A549 (cell line): ENCODE measurements at regions of chr1 and their contacts with region 1.

Region 1: DNA sequence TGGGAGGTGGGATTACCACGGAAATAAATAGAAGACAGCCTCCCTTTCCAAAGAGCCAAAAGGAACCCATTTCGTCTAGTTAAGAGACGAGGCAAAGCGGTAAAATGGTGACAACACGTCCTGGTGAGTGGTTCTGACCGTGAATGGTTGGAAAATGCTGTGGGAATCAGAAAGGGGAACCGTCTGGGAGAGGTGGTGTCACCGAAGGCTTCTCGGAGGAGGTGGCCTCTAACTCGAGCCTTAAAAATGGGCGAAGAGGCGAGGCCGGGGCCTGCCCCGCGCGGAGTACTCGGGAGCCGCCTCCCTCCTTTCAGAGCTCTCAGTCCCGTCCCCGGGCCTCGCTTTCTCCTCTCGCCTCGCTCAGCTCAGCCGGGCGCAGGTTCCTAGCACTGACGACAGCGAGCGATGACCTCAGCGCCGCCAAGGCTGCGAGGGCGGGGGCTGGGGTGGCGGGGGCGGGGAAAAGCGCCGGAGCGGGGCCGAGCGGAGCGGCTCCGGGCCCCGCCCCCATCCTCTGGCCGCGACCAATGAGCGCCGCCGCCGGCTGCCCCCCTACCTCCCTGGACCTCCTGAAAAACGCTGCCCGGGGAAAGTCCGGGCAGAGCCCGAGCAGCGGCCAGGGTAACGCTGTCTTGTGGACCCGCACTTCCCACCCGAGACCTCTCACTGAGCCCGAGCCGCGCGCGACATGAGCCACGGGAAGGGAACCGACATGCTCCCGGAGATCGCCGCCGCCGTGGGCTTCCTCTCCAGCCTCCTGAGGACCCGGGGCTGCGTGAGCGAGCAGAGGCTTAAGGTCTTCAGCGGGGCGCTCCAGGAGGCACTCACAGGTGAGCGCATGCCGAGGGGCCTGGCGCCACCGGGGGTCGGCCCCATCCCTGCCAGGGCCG is at the start of gene BTG2:
- DNase-seq: peak; percentile 84 to 95
- ATAC-seq: peak; percentile 87 to 94
- H3K4me3 ChIP-seq: peak within 1 kb of the TSS; percentile 93
- H3K27ac ChIP-seq: peak within 1 kb of the TSS; percentile 91 to 97
- H3K4me1 ChIP-seq: peaks cover 24% of the 10 kb centered on the region
- CTCF ChIP-seq: no peak
- EP300 ChIP-seq: no peak
- POLR2A ChIP-seq: peak; percentile 99
- RAD21 ChIP-seq: no peak; a peak in 1 of 5 replicates
- polyA plus RNA-seq, gene BTG2: 16.0 and 16.4 TPM in 2 replicates

Region 2: DNA sequence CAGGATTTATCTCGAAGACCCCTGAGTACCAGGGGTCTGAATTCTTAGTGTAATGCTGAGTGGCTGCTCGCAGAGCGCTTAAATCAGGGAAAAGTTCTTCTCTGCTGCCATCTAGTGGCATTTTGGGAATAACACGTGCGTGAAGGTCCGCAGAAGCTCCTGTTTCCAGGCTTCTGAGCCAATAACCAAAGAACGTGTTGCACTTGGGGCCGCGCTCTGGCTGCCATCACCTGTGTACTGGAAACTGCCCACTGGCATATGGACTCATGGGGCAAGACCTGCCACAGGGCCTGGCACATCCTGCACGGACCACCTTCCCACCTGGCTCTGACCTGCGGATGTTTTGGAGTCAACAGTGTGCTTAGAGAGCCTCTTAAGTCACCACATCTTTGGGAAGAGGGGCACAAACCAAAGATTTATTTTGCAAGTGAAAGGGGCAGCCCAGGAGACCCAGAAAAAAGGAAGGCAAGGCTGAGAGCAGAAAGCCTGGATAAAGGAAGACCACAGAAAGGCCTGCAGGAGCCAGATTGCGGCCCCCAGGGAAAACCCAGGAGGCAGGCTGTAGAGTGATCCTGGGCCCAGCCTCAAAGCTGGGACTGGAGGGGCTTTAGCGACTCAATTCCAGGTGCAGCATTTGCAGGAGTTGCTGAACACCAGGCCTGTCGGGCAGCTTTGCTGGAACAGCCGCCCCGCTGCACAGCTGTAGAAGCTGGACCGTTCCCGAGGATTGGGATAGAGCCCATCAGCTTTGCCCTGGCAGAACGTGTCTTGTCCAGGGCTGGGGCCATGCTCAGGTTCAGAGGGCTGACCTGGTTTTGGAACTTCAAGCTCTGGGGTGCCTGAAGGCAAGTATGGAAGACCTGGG is 88.7 kb before region 1 on chr1:
- CTCF ChIA-PET with region 1: no interaction called
- POLR2A ChIA-PET with region 1: no interaction called
- DNase-seq: peak; percentile 60 to 65
- ATAC-seq: peak; percentile 75 to 92
- H3K4me3 ChIP-seq: no peak overlapping the region
- H3K27ac ChIP-seq: no peak overlapping the region
- H3K4me1 ChIP-seq: no peaks in the 10 kb centered on the region
- CTCF ChIP-seq: peak; percentile 90
- EP300 ChIP-seq: no peak
- POLR2A ChIP-seq: no peak
- RAD21 ChIP-seq: peak; percentile 84 to 92

Region 3: GRCh38 chr1:203320591-203321272 is 15.6 kb after region 1 on chr1:
- CTCF ChIA-PET with region 1: interaction called, 65 read pairs
- POLR2A ChIA-PET with region 1: interaction called, 34 read pairs
- DNase-seq: no peak
- ATAC-seq: no peak
- H3K4me3 ChIP-seq: no peak overlapping the region
- H3K27ac ChIP-seq: no peak overlapping the region
- H3K4me1 ChIP-seq: no peaks in the 10 kb centered on the region
- CTCF ChIP-seq: no peak
- EP300 ChIP-seq: no peak
- POLR2A ChIP-seq: no peak
- RAD21 ChIP-seq: no peak

Region 4: DNA sequence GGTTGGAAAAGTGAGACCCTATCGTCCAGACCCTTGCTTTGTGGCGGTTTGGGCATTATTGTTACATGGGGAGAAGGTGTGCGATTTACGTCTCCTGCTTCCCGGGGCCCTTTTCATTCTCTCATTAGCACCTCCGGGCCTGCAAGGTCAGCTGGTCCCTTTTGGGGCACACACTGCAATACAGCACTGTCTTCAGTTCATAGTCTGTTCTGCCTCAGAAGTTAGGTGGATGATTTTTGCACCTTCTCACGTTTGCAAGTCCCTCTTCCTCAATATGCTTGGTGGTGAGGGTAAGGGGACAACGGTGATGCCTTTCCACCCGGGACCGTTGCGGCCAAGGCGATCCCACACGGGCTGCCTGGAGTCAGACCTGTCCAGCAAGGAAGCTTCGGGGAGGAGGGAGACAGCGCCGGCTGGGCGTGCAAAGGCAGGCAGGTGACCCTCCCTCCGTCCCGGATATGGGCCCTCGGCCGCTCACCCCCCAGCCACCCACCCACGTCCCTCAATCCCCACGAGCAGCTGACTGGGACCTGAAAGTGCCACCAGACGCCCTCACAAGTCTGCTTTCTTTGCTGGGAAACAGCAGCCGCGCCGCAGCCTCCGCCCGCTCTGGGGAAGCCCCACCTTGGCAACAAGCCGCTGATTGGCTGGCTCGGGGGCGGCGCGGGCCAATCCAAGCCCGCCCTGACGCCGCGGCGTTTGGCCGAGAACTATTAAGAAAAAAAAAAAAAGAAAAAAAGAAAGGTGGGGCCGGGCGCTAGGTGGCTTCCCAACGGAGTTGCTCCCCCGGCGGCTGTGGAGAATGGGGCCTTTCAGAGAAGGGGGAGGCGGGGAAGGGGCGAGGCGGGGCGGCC is 21.9 kb after region 1 on chr1:
- CTCF ChIA-PET with region 1: interaction called, 65 read pairs
- POLR2A ChIA-PET with region 1: interaction called, 34 read pairs
- DNase-seq: peak; percentile 87 to 95
- ATAC-seq: peak; percentile 86 to 97
- H3K4me3 ChIP-seq: peak overlapping the region; percentile 49
- H3K27ac ChIP-seq: peak overlapping the region; percentile 88 to 92
- H3K4me1 ChIP-seq: peaks cover 27% of the 10 kb centered on the region
- CTCF ChIP-seq: no peak
- EP300 ChIP-seq: no peak
- POLR2A ChIP-seq: peak; percentile 64
- RAD21 ChIP-seq: no peak